ENCODE measurements at regions of chr14 and their contacts with region 1.

Region 1: DNA sequence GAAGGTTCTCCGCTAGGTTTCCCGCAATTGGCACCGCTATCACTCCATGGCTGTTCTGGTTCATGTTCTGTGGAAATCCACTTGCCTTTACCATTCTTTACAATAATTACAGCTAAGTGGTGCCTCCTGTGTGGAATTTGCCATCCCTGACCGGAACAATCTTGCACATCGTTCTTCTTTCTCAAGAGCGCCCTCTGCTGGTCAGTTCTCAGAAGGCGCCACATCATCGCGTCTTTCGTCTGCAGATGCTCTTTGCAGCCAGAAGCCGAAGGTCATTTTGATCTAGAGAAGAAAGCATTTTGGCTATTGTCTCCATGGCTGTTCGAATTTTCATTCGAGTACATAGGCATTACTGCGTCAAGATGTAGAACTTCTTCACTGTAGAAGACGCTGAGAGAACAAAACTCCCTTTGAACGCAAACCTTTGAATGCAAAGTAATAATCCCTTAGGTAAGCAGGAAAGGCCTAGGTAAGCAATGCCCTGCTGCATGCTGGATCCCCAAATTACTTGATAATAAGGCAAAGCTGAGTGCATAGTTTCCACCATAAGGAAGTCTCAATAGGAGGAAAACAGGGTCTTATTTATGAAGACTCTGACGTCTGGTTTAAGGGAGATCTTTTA is 10.1 kb upstream of the RTRAF start:
- DNase-seq: peak; percentile 95
- H3K4me3 Mint-ChIP-seq: no peak overlapping the region
- H3K27ac Mint-ChIP-seq: no peak overlapping the region
- H3K4me1 Mint-ChIP-seq: peaks cover 23% of the 10 kb centered on the region
- H3K27me3 Mint-ChIP-seq: no peaks in the 10 kb centered on the region

Region 2: GRCh38 chr14:51828017-51828797 is 151.0 kb before region 1 on chr14:
- intact Hi-C with region 1: loop called (anchors 5 kb)
- DNase-seq: peak; percentile 88
- H3K4me3 Mint-ChIP-seq: peak overlapping the region; percentile 48
- H3K27ac Mint-ChIP-seq: peak overlapping the region; percentile 18
- H3K4me1 Mint-ChIP-seq: peaks cover 3% of the 10 kb centered on the region
- H3K27me3 Mint-ChIP-seq: peaks cover 5% of the 10 kb centered on the region

Region 3: GRCh38 chr14:51860164-51860824 is 118.9 kb before region 1 on chr14 and contains the start of gene GNG2:
- intact Hi-C with region 1: loop called (anchors 5 kb)
- DNase-seq: peak; percentile 95
- H3K4me3 Mint-ChIP-seq: peak within 1 kb of the TSS; percentile 99
- H3K27ac Mint-ChIP-seq: peak within 1 kb of the TSS; percentile 92
- H3K4me1 Mint-ChIP-seq: peaks cover 51% of the 10 kb centered on the region
- H3K27me3 Mint-ChIP-seq: no peaks in the 10 kb centered on the region
- total RNA-seq, gene GNG2: 104 and 105 TPM in 2 replicates

Region 4: DNA sequence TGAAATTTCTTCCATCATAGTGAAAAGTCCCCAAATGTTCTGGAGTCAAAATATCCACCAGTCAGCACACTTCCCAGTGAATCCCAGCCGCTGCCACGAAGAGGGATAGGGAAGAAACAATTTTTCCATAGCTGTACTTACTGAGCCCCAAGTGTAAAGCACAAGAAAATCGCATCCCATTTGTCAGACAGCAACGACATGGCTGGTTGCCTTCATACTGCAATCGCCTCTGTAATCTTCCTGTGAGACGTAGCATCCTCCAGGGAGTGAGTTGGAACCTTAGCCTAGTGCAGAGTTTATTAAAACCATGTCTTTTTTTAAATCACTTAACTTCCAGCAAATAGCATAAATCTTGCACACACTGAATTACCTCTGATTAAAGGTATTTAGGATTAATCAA is 62.0 kb before region 1 on chr14:
- intact Hi-C with region 1: no loop called
- DNase-seq: no peak
- H3K4me3 Mint-ChIP-seq: no peak overlapping the region
- H3K27ac Mint-ChIP-seq: no peak overlapping the region
- H3K4me1 Mint-ChIP-seq: peaks cover 29% of the 10 kb centered on the region
- H3K27me3 Mint-ChIP-seq: no peaks in the 10 kb centered on the region

Measured in activated CD4-positive, alpha-beta T cell treated with anti-CD3 and anti-CD28 coated beads, Interleukin-2, amount 10 ng/mL, durations not matched to agents 24 days and 14 days (primary cell).